ENCODE measurements at regions of chr15 and their contacts with region 1.

Region 1: DNA sequence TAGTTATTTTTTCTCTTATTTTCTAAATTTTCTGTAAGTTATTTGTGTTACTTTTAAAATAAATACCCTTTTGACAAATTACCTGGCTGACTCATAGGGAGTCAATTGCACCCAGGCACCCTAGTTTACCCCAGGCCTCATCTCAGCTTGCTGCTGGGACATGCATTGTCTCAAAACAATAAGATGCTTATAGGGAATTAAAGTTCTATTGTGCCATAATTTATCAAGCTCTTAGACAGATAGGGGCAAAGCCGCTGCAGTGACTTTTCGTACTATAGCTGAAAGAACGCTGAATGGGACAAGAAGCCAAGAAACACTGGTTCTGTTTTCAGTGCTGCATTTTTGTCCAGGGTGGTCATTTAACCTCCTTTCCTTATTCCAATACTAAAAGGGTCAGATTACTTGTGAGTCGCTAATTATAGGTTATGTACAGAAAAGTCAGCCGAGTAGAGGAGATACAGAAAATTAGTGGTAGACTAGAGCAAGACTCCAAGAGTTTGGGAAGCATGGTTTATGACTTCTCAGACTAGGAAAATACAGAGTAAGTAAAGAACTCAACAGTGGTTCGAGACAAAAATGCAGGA is 50.3 kb downstream of the EXD1 start:
- DNase-seq: no peak
- H3K4me3 ChIP-seq: no peak overlapping the region
- H3K27ac ChIP-seq: no peak overlapping the region
- H3K4me1 ChIP-seq: no peaks in the 10 kb centered on the region
- H3K27me3 ChIP-seq: no peaks in the 10 kb centered on the region
- CTCF ChIP-seq: no peak
- POLR2A ChIP-seq: no peak

Region 2: DNA sequence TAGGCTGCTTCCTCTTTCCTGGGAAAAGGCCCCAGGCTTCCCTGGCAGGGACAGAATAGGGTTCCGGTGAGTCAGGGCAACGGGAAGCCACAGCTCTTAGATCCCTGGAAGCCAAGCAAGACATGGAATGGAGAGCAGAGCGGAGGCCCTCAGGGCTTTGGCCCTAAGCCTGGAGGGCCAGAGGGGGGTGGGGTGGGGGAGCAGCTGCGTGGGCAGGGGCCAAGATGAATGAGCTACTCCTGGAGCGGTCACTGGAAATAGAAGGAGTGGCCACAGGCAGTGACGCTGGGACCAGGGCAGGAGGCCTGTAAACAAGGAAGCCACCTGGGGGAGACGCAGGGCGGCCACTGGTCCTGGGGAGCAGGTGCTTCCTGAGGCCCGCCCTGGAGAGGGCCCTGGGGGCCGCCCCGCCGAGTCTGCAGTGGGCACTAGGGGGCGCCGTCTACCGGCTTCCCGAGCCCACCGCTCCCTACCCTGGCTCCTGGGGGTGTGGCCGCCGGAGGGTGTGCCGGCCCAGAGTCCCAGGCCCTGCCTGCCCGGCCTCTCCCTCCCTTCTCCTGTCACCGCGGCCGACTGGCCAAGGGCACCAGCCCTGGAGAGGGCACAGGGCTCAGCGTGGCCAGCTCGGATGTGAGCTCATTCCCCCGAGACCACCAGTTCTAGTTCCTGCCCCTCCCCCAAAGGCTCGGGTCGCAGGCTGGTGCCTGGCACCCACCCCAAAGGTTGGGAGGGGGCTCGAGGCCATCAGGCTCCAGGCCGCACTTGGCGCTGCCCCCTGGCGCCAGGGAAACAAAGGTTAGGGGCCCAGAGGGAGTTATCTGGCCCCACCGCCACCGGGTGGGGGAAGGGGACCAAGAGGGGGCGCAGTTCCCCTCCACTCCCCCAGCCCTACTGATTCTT is 274.0 kb before region 1 on chr15:
- intact Hi-C with region 1: loop called (anchors 10 kb)
- DNase-seq: peak; percentile 82
- H3K4me3 ChIP-seq: peak overlapping the region; percentile 50 to 53
- H3K27ac ChIP-seq: peak overlapping the region; percentile 52 to 84
- H3K4me1 ChIP-seq: peaks cover 18% of the 10 kb centered on the region
- H3K27me3 ChIP-seq: no peaks in the 10 kb centered on the region
- CTCF ChIP-seq: peak; percentile 68 to 76 (median 73)
- POLR2A ChIP-seq: no peak

Region 3: GRCh38 chr15:40974879-40975278 is 205.4 kb before region 1 on chr15:
- intact Hi-C with region 1: no loop called
- DNase-seq: no peak
- H3K4me3 ChIP-seq: no peak overlapping the region
- H3K27ac ChIP-seq: no peak overlapping the region
- H3K4me1 ChIP-seq: no peaks in the 10 kb centered on the region
- H3K27me3 ChIP-seq: no peaks in the 10 kb centered on the region
- CTCF ChIP-seq: peak in 1 of 3 experiments; percentile 4
- POLR2A ChIP-seq: no peak

Measured in testis (tissue), 5 donors.